PC-3 (cell line): ENCODE measurements at regions of chr2 and their contacts with region 1.

Region 1: GRCh38 chr2:200077210-200077650 is 121.8 kb downstream of the MAIP1 start:
- DNase-seq: peak; percentile 93
- ATAC-seq: peak; percentile 96
- H3K4me3 ChIP-seq: peak overlapping the region; percentile 52
- H3K27ac ChIP-seq: peak overlapping the region; percentile 95
- H3K4me1 ChIP-seq: peaks cover 33% of the 10 kb centered on the region
- H3K27me3 ChIP-seq: no peaks in the 10 kb centered on the region
- CTCF ChIP-seq: no peak

Region 2: GRCh38 chr2:199979832-199980628 is 97.2 kb before region 1 on chr2:
- CTCF ChIA-PET with region 1: no interaction called
- POLR2A ChIA-PET with region 1: no interaction called
- intact Hi-C with region 1: loop called (anchors 1 kb)
- DNase-seq: peak; percentile 89
- ATAC-seq: peak; percentile 52
- H3K4me3 ChIP-seq: no peak overlapping the region
- H3K27ac ChIP-seq: no peak overlapping the region
- H3K4me1 ChIP-seq: peaks cover 26% of the 10 kb centered on the region
- H3K27me3 ChIP-seq: no peaks in the 10 kb centered on the region
- CTCF ChIP-seq: peak; percentile 96

Region 3: GRCh38 chr2:200259577-200260008 is 182.4 kb after region 1 on chr2:
- CTCF ChIA-PET with region 1: no interaction called
- POLR2A ChIA-PET with region 1: no interaction called
- intact Hi-C with region 1: loop called (anchors 1 kb)
- DNase-seq: peak; percentile 97
- ATAC-seq: peak; percentile 89
- H3K4me3 ChIP-seq: peak overlapping the region; percentile 58
- H3K27ac ChIP-seq: peak overlapping the region; percentile 94
- H3K4me1 ChIP-seq: peaks cover 30% of the 10 kb centered on the region
- H3K27me3 ChIP-seq: no peaks in the 10 kb centered on the region
- CTCF ChIP-seq: no peak

Region 4: GRCh38 chr2:200300648-200301314 is 223.6 kb after region 1 on chr2:
- CTCF ChIA-PET with region 1: no interaction called
- POLR2A ChIA-PET with region 1: no interaction called
- intact Hi-C with region 1: loop called (anchors 5 kb)
- DNase-seq: peak; percentile 92
- ATAC-seq: peak; percentile 49
- H3K4me3 ChIP-seq: no peak overlapping the region
- H3K27ac ChIP-seq: peak overlapping the region; percentile 23
- H3K4me1 ChIP-seq: peaks cover 54% of the 10 kb centered on the region
- H3K27me3 ChIP-seq: no peaks in the 10 kb centered on the region
- CTCF ChIP-seq: no peak